Dorsolateral prefrontal cortex (tissue), 120 donors: ENCODE measurements at regions of chr10 and their contacts with region 1.

Region 1: GRCh38 chr10:36640626-36641025 is 484.8 kb upstream of the ANKRD30A start:
- DNase-seq: no peak
- H3K4me3 ChIP-seq: no peak overlapping the region
- H3K27ac ChIP-seq: no peak overlapping the region
- H3K27me3 ChIP-seq: peaks cover 0 to 7% (median 0%) of the 10 kb centered on the region in 45 donors
- CTCF ChIP-seq: no peak

Region 2: GRCh38 chr10:36692759-36693158 is 52.1 kb after region 1 on chr10:
- intact Hi-C with region 1: loop called in 1 of 2 experiments (anchors 5 kb)
- DNase-seq: no peak
- H3K4me3 ChIP-seq: no peak overlapping the region
- H3K27ac ChIP-seq: no peak overlapping the region
- H3K27me3 ChIP-seq: peaks cover 0 to under 1% (median 0%) of the 10 kb centered on the region in 45 donors
- CTCF ChIP-seq: no peak

Region 3: DNA sequence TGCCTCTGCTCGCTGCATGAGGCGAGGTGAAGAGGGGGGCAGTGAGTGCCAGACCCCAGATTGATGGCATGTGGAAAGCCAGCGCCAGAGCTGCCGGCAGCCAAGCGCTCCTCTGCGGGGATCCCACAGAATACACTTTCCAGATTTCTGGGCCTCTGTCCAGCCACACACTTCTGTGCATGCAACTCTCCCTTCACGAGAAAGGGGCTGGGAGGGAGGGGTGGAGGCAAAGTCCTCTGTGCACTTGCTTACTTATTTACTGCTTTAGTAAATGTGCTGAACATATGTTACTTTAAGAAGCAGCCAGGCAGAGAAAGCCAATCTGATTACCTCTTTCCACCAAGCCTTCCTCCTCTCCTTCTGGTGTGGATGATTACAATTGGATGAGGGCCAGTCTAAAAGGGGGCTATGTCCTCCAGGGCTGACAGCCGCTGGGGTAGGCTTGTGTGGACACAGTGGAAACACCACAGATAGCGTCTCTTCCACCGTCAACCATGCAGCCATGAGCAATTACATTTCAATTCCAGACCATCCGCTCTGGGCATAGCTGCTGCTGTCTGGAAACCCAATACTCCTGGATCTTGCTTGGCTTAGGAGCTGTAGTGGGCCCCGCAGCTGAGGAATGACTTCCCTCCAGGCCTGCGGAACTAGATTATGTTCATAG is 162.0 kb after region 1 on chr10:
- intact Hi-C with region 1: no loop called
- DNase-seq: peak in 3 of 10 donors; percentile 24 to 53 (median 50)
- H3K4me3 ChIP-seq: peak overlapping the region in 5 of 59 donors; percentile 2 to 24 (median 15)
- H3K27ac ChIP-seq: peak overlapping the region in 4 of 59 donors; percentile 17 to 30 (median 22)
- H3K27me3 ChIP-seq: peaks cover 0 to 10% (median 0%) of the 10 kb centered on the region in 45 donors
- CTCF ChIP-seq: no peak